ENCODE measurements at regions of chr11 and their contacts with region 1.

Region 1: GRCh38 chr11:70270104-70270876 is at the start of gene PPFIA1:
- DNase-seq: peak; percentile 96 to 98
- ATAC-seq: peak; percentile 99
- H3K4me3 ChIP-seq: peak within 1 kb of the TSS; percentile 86
- H3K27ac ChIP-seq: peak within 1 kb of the TSS; percentile 91
- H3K4me1 ChIP-seq: peaks cover 19% of the 10 kb centered on the region
- H3K27me3 ChIP-seq: peaks cover 0 to 28% (median 5%) of the 10 kb centered on the region in 3 donors
- CTCF ChIP-seq: no peak
- total RNA-seq, gene PPFIA1: 31.2 to 49.5 (median 44.2) TPM

Region 2: GRCh38 chr11:70205051-70205725 is 65.1 kb before region 1 on chr11:
- intact Hi-C with region 1: loop called in 1 of 2 experiments (anchors 5 kb)
- DNase-seq: no peak
- ATAC-seq: no peak
- H3K4me3 ChIP-seq: peak overlapping the region; percentile 94
- H3K27ac ChIP-seq: peak overlapping the region; percentile 9
- H3K4me1 ChIP-seq: peaks cover 12% of the 10 kb centered on the region
- H3K27me3 ChIP-seq: peaks cover 0 to 2% (median 0%) of the 10 kb centered on the region in 3 donors
- CTCF ChIP-seq: no peak

Region 3: DNA sequence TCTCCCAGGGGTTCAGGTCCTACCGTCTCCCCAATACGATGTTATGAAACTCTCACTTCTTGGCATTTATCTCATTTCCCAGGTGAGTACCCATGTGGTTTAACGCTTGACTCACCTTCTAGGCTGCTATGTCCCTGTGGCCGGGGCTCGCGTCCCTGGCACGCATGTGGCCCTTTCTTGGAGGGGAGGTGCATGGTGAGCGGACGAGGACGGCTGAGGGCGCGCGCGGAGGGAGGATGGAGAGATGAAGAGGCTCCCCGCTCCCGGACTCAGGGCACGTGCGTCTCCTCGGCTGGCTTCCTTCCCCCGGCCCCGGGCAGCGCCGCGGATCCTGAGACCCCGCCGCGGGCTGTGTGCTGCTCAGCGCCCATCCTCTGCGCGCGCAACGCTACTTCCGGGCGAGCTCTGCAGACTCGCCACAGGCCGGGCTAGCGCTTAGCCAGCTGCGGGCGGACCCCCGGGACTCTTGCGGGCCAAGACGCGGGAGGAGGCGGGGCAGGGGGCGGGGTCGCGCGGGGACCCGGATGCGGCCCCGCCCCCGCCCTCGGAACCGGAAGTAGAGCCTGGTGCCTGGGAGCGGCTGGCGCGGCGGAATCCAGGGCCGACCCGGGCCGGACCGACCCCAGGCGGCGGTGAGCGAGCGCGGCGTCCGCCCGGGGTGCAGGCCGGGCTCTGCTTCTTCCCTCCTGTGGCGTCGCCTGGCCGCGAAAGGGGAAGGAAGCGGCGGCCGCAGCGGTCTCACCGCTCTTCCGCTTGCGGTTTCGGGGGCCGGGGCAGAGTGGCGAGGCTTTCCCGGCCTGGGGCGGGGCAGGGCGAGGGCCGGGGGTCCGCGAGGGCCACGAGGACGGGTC is 127.9 kb after region 1 on chr11 and contains the start of gene CTTN:
- intact Hi-C with region 1: loop called in 1 of 2 experiments (anchors 10 kb)
- DNase-seq: peak; percentile 90 to 94
- ATAC-seq: peak; percentile 87 to 90 (median 89)
- H3K4me3 ChIP-seq: peak within 1 kb of the TSS; percentile 79
- H3K27ac ChIP-seq: peak within 1 kb of the TSS; percentile 88
- H3K4me1 ChIP-seq: peaks cover 20% of the 10 kb centered on the region
- H3K27me3 ChIP-seq: no peaks in the 10 kb centered on the region
- CTCF ChIP-seq: no peak
- total RNA-seq, gene CTTN: 60.0 to 117 (median 91.2) TPM

Region 4: GRCh38 chr11:71453037-71453898 is 1183.0 kb after region 1 on chr11 and contains the start of gene NADSYN1:
- intact Hi-C with region 1: loop called in 1 of 2 experiments (anchors 10 kb)
- DNase-seq: peak; percentile 97 to 99
- ATAC-seq: peak; percentile 91 to 93 (median 91)
- H3K4me3 ChIP-seq: peak within 1 kb of the TSS; percentile 87
- H3K27ac ChIP-seq: peak within 1 kb of the TSS; percentile 80
- H3K4me1 ChIP-seq: peaks cover 16% of the 10 kb centered on the region
- H3K27me3 ChIP-seq: no peaks in the 10 kb centered on the region
- CTCF ChIP-seq: no peak
- total RNA-seq, gene NADSYN1: 13.0 to 19.3 (median 13.6) TPM